ENCODE measurements at regions of chr6 and their contacts with region 1.

Region 1: DNA sequence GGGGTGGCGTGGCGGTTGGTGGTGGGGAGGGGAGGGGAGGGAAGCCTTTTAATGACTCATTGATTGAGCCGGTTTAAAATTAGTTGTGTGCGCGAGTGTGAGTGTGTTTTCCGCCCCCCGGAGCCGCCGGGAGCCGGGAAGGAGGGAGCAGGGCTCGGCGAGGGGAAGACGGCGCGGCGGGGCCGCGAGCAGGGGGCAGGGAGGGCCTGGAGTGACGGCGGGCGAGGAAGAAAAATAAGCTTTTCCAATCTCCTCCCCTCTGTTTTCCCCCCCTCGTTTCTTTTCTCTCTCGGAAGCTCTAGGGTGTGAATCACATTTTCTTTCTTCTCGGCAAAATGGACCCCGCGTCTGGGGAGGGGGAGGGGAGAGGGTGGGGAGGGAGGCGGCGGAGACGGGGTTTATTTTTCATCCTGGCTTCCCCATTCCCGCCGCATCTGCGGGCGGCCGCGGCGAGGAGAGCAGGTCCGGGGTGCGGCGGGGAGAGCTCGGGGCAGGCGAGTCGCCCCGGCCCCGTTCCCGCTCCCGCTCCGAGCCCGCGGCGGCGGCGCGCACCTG is 847 bp downstream of the BICRAL start:
- DNase-seq: peak; percentile 48
- H3K4me3 Mint-ChIP-seq: peak overlapping the region; percentile 96
- H3K27ac Mint-ChIP-seq: peak overlapping the region; percentile 98
- H3K4me1 Mint-ChIP-seq: peaks cover 28% of the 10 kb centered on the region
- H3K27me3 Mint-ChIP-seq: no peaks in the 10 kb centered on the region

Region 2: DNA sequence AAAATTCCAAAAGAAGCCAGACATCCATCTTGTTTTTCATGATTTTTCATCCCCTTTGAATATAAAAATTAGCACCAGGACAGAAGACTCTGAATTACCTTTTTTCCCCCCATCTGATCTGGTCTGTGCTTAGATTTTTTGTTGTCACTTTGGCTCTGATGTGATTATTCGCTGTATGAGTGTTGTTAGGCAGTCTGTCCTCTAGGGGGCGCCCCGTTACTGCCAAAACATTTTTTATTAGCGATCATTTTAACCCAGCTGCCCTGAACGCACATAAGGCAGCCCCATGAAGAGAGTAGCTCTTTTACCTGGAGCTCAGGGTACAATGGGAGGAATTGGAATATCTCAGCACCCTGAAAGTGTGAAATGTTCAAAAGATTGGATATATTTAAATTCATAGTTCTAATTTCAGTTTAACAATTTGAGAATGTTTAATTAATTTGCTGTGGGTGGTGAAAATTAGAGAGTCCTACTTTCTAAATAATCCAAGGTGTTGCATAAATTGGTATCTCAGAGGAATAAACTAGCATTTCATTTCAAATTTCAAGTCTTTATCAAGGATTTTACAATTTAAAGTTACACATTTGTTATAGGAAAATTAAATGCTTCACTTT is 121.1 kb before region 1 on chr6:
- intact Hi-C with region 1: no loop called
- DNase-seq: peak; percentile 62
- H3K4me3 Mint-ChIP-seq: no peak overlapping the region
- H3K27ac Mint-ChIP-seq: no peak overlapping the region
- H3K4me1 Mint-ChIP-seq: peaks cover 6% of the 10 kb centered on the region
- H3K27me3 Mint-ChIP-seq: no peaks in the 10 kb centered on the region

Region 3: DNA sequence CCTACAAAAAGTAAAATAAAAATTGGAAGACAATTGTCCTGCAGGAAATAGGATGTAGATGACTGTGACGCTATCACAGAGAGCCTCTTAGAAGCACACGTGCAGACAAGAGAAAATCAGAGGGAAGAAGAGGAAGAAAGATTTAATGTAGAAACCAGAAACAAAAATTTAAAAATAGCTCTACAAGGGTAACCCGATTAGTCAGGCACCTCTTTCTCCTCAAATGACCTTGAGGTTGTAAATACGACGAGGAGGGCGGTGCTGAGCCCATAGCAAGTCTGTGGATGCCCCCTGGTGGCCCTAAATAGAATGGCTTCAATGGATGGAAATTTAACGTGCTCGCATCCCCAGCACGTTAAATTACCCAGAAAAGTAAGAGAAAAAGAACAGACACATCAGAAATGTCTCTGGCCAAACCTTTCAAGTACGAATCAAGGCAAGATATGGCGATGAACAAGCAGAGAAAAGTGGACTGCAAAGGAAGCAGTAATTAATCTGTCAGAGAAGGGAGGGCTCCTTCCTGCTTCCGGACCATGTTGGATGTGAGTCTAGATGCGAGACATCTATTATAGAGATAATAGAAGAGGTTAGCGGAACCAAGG is 56.1 kb before region 1 on chr6:
- intact Hi-C with region 1: loop called (anchors 5 kb)
- DNase-seq: peak; percentile 59
- H3K4me3 Mint-ChIP-seq: peak overlapping the region; percentile 75
- H3K27ac Mint-ChIP-seq: peak overlapping the region; percentile 98
- H3K4me1 Mint-ChIP-seq: peaks cover 19% of the 10 kb centered on the region
- H3K27me3 Mint-ChIP-seq: peaks cover 5% of the 10 kb centered on the region

Region 4: DNA sequence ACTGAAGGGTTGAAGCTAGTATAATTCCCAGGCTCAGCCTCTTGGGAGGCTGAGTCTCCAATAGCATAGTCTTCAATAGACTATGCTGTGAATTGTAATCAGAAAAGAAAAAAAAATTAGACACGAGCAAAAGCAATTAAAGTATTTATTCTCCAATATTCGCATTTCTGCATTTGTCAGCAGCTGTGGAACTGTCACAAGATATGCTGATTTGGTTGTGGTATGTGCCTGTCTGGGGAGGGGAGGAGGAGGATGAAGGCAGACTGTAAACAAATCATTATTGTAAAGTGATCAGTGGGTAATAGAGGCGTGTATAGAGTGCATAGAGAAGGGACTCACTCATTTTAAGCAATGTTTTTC is 11.0 kb before region 1 on chr6:
- intact Hi-C with region 1: loop called (anchors 1 kb)
- DNase-seq: no peak
- H3K4me3 Mint-ChIP-seq: peak overlapping the region; percentile 74
- H3K27ac Mint-ChIP-seq: peak overlapping the region; percentile 100
- H3K4me1 Mint-ChIP-seq: peaks cover 55% of the 10 kb centered on the region
- H3K27me3 Mint-ChIP-seq: no peaks in the 10 kb centered on the region

Region 5: GRCh38 chr6:42813906-42814444 is 31.3 kb after region 1 on chr6:
- intact Hi-C with region 1: loop called (anchors 1 kb)
- DNase-seq: no peak
- H3K4me3 Mint-ChIP-seq: no peak overlapping the region
- H3K27ac Mint-ChIP-seq: no peak overlapping the region
- H3K4me1 Mint-ChIP-seq: peaks cover 7% of the 10 kb centered on the region
- H3K27me3 Mint-ChIP-seq: no peaks in the 10 kb centered on the region

Region 6: GRCh38 chr6:42845327-42845694 is 62.6 kb after region 1 on chr6:
- intact Hi-C with region 1: loop called (anchors 5 kb)
- DNase-seq: no peak
- H3K4me3 Mint-ChIP-seq: no peak overlapping the region
- H3K27ac Mint-ChIP-seq: no peak overlapping the region
- H3K4me1 Mint-ChIP-seq: peaks cover 4% of the 10 kb centered on the region
- H3K27me3 Mint-ChIP-seq: no peaks in the 10 kb centered on the region

Region 7: GRCh38 chr6:43297644-43298564 is 515.2 kb after region 1 on chr6 and contains the start of gene SLC22A7:
- intact Hi-C with region 1: no loop called
- DNase-seq: no peak
- H3K4me3 Mint-ChIP-seq: no peak within 1 kb of the TSS
- H3K27ac Mint-ChIP-seq: no peak within 1 kb of the TSS
- H3K4me1 Mint-ChIP-seq: no peaks in the 10 kb centered on the region
- H3K27me3 Mint-ChIP-seq: peaks cover 14% of the 10 kb centered on the region
- total RNA-seq, gene SLC22A7: not detected in 2 replicates

Measured in activated T-helper 1 cell treated with anti-CD3 and anti-CD28 coated beads, Interleukin-12 subunit alpha, Interleukin-12 subunit beta, Interleukin-2, Interleukin-4 antibody, amounts not matched to agents 30 ng/mL and 10 ng/mL and 1 ng/mL, durations not matched to agents 14 hours and 24 hours and 36 hours (primary cell).